ENCODE measurements at regions of chr10 and their contacts with region 1.

Region 1: DNA sequence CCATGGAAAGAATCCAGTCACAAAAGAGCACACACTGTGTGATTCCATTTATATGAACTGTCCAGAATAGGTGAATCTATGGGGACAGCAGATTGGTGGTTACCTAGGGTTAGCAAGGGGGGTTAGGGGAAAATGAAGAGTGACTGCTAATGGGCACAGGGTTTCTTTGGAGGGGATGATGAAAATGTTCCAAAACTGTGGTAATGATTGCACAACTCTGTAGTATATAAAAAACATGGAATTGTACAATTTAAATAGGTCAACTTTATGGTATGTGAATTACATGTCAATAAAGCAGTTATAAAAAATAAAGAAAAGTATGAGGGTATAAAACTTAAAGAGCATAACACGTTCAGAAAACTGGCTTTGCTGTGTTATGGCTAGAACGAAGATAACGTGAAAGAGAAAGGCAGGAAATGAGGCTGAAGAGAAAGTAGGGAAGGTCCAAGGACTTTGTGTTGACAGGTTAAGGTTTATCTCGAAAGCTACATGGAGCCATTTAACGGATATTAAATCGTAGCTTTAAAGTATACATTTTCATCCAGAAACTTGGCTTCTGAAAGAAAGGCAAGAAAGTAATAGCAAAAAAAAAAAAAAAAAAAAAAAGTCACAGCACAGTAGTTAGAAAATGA is 26.4 kb upstream of the MSS51 start:
- DNase-seq: no peak
- ATAC-seq: no peak
- H3K4me3 ChIP-seq: no peak overlapping the region
- H3K27ac ChIP-seq: no peak overlapping the region
- H3K4me1 ChIP-seq: no peaks in the 10 kb centered on the region
- H3K27me3 ChIP-seq: no peaks in the 10 kb centered on the region
- CTCF ChIP-seq: no peak

Region 2: DNA sequence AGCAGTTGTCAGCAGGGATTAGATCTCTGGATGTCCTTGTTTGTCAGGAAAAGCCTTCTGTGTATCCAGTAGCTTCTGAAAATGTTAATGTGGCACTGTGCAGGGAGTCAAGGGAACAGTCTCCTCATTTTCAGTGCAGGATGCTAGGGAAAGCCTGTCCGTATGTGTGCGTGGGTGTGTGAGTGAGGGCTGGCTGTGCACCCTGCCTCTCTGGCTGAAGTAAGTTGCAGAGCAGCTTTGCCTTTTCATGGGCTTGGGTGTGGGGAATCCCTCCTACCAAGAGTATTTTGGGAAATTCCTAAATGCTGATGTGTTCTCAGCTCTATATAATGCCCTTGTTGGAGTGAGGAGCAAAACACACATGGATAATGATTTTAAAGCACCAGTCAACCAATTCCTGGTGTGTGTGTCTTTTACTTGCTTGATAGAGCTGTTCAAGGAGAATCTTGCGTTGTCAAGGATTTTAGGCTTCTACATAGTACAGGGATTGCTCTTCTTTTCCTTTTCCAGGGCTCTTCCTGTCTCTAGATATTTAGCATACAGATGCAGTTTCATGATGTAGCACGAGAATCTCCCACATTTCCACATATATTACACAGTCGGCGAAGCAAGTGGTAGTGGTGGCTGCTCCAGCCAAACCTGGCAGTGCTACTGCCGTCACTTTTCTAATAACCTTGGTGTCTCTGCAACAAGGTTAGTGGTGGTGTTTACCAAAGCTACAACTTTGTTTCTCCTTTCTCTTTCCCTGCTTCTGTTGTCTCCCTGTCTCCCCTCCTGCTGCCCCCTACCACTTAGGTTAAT is 675.0 kb before region 1 on chr10:
- CTCF ChIA-PET with region 1: interaction called, 10 read pairs
- POLR2A ChIA-PET with region 1: no interaction called
- intact Hi-C with region 1: no loop called
- DNase-seq: peak; percentile 98
- ATAC-seq: peak; percentile 83
- H3K4me3 ChIP-seq: no peak overlapping the region
- H3K27ac ChIP-seq: no peak overlapping the region
- H3K4me1 ChIP-seq: peaks cover 36% of the 10 kb centered on the region
- H3K27me3 ChIP-seq: peaks cover 31% of the 10 kb centered on the region
- CTCF ChIP-seq: no peak

Measured in PC-3 (cell line).